Right ventricle myocardium superior (tissue), 1 donor: ENCODE measurements at regions of chr5 and their contacts with region 1.

Region 1: DNA sequence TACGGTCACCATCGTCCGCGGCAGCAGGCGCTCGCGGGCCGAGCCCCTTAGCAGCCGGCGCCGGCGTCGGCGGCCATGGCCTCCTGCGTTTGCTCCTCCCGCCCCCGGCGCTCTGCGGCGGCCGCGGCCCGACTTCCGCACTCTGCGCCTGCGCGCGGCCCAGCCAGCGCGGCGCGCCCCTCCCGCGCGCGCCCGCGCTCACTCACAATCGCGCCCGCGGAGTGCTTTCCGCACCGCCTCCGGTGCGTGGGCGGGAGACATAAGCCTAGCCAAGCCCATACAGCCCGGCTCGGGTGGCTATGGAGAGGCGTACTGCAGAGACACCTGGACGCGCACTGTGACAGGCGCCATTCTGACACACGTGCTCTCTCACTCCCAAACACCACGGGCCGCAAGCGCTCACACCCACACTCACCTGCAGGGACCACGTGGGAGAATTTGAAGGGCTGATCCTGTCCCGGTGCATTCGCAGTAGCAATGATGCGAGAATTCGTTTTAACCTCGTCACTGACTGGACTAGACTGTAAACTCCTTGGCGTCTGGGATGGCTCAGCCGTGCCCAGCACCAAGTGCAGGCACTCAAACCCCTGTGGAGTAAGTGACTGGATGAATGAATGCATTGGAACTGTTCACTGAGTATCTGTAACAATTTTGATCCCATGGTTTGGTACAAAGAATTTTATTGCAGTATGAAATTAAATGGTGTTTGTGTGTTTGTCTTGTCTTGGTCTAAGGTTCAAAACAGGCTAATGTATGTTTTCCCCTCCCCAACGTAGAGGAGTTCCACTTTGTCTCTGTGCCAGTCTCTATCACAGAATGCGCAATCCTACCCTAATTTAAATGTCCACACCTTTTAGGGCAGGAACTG is at the start of gene RNF145:
- DNase-seq: peak; percentile 94
- ATAC-seq: peak; percentile 81
- total RNA-seq, gene RNF145: 20.7 TPM

Region 2: DNA sequence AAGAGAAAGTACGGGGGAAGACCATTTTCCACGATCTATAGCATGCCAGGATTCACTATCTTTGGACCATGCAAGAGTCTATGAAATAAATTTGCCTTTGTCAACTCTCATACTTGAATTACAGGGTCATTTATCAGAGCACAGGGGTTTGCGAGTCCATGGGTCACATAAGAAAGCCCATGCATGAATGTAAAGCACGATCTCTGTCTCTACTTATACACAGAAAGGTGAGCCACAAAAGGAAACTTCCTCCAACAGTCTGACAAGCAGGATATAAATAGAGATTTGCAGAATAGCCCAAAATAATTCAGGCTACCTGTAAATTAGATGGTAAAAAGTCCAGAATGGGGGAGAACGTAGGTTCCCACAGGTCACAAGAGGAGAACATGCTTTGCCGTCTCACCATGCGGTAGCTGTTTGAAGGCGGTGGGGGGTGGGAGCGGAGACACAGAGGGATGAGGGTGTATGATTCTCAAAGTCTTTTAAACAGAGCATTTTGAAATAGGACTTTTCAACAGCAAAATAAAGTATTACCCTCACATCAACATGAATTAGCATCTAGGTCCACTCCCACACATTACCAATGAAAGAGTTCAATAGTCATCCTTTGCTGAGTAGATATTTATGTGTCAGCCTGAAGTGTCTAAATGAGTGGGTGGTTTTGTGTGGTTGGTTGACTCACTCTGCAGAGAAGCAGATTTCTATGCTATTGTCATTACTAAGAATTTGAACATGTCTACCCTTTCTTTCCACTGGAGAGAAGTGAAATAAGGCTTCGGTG is 389.6 kb before region 1 on chr5:
- intact Hi-C with region 1: no loop called
- DNase-seq: no peak
- ATAC-seq: no peak

Region 3: GRCh38 chr5:158898185-158899177 is 311.2 kb before region 1 on chr5:
- intact Hi-C with region 1: no loop called
- DNase-seq: no peak
- ATAC-seq: no peak

Region 4: GRCh38 chr5:158921441-158922262 is 288.0 kb before region 1 on chr5:
- intact Hi-C with region 1: no loop called
- DNase-seq: no peak
- ATAC-seq: no peak

Region 5: DNA sequence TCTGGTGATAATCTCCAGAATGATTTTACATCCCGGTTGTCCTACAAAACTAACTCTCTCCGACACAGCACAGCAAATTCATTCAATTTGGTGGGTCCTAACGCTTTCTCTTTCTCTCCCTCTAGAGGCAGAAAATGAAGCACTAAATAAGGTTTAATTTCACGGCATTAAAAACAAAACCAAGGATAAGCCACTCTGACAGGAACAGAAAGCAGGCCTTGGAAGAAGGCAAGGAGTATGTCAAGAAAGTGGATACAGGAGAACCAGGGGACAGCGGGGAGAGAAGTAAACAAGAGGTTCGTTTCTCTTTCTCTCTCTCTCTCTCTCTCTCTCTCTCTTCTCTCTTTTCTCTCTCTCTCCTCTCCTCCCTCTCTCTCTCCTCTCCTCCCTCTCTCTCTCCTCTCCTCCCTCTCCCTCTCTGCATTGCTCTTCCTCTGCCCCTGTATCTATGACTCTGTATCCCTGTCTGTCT is 159.8 kb before region 1 on chr5:
- intact Hi-C with region 1: no loop called
- DNase-seq: no peak
- ATAC-seq: peak; percentile 65

Region 6: GRCh38 chr5:159174511-159175168 is 35.0 kb before region 1 on chr5:
- intact Hi-C with region 1: loop called (anchors 5 kb)
- DNase-seq: no peak
- ATAC-seq: peak; percentile 83

Region 7: DNA sequence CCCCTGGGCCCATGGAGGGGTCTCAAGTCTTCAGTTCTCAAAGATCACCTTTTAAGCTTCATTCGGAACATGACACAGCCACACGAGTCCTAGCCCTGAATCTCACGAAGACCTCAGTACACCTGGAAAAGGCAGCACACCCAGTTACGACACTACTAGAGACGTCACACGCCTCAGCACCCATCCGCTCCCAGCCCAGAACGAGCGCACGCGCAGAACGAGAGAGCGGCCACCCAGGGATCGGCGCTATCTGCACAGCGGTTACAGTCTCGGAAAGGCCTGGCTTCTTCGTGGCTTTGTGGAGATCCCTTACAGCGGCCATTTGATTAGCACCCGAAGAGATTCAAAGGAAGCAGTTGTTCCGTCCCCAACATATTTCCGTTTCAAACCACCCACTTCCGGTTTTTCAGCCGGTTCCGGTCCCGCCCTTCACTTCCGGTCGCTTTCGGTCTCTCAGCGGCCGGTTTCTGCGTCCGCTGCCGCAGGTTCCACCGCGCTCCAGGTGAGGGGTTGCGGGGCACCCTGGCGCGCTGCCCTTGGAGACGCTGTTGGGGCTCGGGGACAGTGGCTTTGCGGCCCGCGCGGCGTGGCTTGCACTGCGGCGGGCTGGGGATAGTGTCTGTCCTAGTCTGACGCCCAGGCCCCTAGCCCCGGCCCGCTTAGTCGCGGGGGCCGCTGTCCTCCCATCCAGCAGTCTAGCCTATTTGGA is 53.3 kb after region 1 on chr5 and contains the start of gene UBLCP1:
- intact Hi-C with region 1: loop called (anchors 5 kb)
- DNase-seq: peak; percentile 87
- ATAC-seq: peak; percentile 97
- total RNA-seq, gene UBLCP1: 13.3 TPM